ENCODE measurements at regions of chr17 and their contacts with region 1.

Region 1: DNA sequence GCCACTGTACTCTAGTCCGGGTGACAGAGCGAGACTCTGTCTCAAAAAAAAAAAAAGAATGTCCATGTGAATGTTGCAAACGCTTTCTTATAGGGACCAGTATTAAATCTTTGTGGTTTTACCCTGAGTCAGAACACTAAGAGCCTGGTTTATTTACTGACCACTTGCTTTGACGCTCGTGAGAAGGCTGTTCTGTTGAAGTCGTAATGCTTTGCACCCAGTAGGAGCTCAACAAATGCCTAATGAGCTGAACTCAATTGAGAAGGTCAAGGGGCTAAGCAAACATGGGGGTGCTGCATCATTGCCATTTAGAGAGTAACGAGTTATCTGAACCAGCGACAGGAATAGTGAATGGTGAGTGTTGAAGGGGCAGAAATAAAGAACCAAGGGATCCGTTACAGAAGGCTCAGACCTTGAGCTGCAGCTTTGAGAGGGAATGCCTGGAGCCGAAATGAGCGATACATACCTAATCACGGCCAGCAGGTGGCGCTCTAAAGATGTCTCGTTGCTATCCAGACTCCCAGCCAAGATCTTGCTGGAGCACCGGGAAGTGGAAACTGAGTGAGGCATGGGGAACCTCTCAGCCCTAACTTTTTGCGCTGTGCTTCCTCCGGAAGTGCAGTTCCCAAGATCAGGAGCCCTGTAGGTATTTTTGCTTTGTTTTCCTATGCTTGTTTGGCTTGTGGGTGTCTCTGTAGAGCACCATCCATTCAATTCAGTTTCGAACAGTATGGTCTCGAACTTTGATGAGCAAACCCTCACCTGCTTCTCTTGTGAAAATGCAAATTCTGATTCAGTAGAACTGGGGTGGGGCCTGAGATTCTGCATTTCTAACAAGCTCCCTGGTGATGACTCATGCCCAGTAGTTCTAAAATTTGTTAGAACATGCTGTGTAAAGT is 12.6 kb upstream of the RNF222 start:
- DNase-seq: peak; percentile 88
- H3K4me3 Mint-ChIP-seq: no peak overlapping the region
- H3K27ac Mint-ChIP-seq: no peak overlapping the region
- H3K4me1 Mint-ChIP-seq: peaks cover 21% of the 10 kb centered on the region
- H3K27me3 Mint-ChIP-seq: peaks cover 50% of the 10 kb centered on the region

Region 2: GRCh38 chr17:8300627-8301242 is 109.5 kb before region 1 on chr17:
- CTCF ChIA-PET with region 1: no interaction called
- DNase-seq: peak; percentile 70
- H3K4me3 Mint-ChIP-seq: no peak overlapping the region
- H3K27ac Mint-ChIP-seq: no peak overlapping the region
- H3K4me1 Mint-ChIP-seq: peaks cover 16% of the 10 kb centered on the region
- H3K27me3 Mint-ChIP-seq: peaks cover 12% of the 10 kb centered on the region

Region 3: GRCh38 chr17:8420041-8420934 is 10.1 kb after region 1 on chr17:
- CTCF ChIA-PET with region 1: interaction called, 16 read pairs
- DNase-seq: no peak
- H3K4me3 Mint-ChIP-seq: no peak overlapping the region
- H3K27ac Mint-ChIP-seq: no peak overlapping the region
- H3K4me1 Mint-ChIP-seq: no peaks in the 10 kb centered on the region
- H3K27me3 Mint-ChIP-seq: peaks cover 63% of the 10 kb centered on the region

Region 4: DNA sequence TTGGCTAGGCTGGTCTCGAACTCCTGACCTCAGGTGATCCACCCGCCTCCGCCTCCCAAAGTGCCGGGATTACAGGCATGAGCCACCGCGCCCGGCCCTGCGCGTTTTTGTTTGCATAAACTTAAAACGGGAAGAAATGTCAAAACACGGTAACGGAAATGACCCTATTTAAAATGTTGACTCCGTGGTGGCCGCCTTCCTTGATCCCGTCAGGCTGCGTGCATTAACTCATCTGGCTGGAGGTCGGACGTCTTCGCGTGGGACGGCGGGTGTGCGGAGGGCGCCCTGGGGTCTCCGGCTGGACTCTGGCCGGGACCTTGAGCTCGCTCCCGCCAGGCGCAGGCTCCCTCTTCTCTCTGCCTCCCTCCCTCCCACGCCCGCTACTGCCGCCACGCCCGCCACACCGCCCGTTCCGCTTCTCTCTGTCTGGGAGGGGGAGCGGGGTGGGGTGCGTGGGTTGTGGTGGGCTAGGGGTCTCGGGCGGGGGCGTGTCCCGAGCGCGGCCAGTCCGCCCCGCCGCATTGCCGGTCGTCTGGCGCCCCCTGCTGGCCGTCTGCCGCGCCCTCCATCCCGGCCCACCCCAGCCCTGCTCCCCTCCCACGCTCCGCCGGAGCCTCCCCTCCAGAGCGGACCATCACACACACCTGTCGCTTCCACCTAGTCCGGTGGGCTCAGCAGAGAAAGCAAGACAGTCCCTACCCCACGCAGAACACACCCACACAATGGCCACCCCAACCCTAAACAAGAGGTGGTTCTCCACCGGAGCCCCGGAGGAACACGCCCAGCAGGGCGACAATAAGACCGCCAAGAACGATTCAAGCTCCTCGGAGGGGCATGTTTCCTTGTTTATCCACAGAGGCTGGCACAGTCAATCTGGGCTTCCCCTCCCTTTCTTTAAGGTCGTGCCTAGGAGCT is 335.6 kb after region 1 on chr17:
- CTCF ChIA-PET with region 1: interaction called, 16 read pairs
- DNase-seq: peak; percentile 81
- H3K4me3 Mint-ChIP-seq: peak overlapping the region; percentile 83
- H3K27ac Mint-ChIP-seq: peak overlapping the region; percentile 92
- H3K4me1 Mint-ChIP-seq: peaks cover 26% of the 10 kb centered on the region
- H3K27me3 Mint-ChIP-seq: peaks cover 11% of the 10 kb centered on the region

Region 5: DNA sequence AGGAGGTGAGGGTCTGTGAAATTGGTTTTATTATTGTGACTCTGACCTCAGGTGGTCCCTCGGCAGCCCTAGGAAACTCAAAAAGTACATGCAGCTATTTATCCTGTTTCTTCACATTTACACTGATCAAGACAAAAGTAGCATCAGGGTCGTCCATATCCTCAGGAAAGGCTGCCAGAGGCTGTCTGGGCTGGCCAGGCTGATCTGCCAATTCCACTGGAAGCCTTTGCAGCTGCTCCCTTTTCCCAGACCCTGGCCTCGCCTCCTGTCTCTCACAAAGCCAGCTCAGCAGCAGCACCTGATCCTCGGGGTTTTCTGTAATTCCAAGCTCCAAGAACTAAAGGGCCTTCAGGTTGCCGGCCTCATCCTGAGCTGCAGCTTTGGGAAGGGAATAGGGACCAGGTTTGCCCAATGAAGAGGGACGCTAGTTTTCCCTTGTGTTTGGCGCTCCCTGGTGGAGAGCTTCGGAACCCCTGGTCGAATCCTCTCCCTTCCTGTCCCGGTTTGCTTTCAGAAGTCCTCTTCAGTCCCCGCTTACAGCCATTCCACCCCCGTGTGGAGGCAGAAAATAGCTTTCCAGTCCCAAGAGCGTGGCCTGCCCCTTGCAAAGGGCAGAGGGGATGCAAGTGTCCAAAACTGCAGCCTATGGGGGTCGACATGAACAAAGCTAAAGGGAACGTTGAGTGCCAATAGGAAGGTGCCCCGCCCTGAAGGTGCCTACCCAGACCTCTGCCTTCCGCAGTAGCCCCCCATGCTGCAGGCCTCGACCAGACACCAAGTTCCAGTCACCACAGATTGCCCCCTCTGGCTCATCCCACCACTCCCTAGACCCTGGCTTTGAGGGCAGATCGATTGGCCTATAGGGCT is 375.6 kb after region 1 on chr17:
- CTCF ChIA-PET with region 1: interaction called, 10 read pairs
- DNase-seq: peak; percentile 77
- H3K4me3 Mint-ChIP-seq: no peak overlapping the region
- H3K27ac Mint-ChIP-seq: no peak overlapping the region
- H3K4me1 Mint-ChIP-seq: no peaks in the 10 kb centered on the region
- H3K27me3 Mint-ChIP-seq: peaks cover 17% of the 10 kb centered on the region

Measured in activated naive CD4-positive, alpha-beta T cell treated with anti-CD3 and anti-CD28 coated beads, Interleukin-2, amount 10 ng/mL, durations not matched to agents 7 days and 5 days (primary cell).